Posterior vena cava (tissue), 2 donors: ENCODE measurements at regions of chr20 and their contacts with region 1.

Region 1: DNA sequence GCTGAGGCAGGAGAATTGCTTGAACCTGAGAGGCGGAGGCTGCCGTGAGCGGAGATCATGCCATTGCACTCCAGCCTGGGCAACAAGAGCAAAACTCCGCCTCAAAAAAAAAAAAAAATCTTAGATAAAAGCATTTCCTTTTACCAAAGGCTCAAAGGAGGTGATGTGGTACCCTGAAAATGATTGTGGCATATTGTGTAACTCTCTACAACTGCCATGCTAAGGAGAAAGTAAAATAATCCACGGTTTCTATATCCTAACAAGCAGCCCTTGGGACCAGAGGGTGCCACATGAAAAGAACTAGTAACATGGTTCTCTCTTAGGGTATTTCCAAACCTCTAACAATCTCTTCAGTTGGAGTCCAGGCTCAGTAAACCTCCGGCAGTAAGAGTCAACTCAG is 38.8 kb upstream of the SLA2 start:
- DNase-seq: no peak

Region 2: GRCh38 chr20:36234771-36235320 is 449.9 kb before region 1 on chr20:
- intact Hi-C with region 1: loop called in 1 of 2 experiments (anchors 5 kb)
- DNase-seq: no peak